ENCODE measurements at regions of chr6 and their contacts with region 1.

Region 1: GRCh38 chr6:158593670-158594069 is 33.8 kb downstream of the TMEM181 start:
- DNase-seq: no peak
- H3K4me3 ChIP-seq: no peak overlapping the region
- H3K27ac ChIP-seq: no peak overlapping the region
- H3K4me1 ChIP-seq: no peaks in the 10 kb centered on the region
- H3K27me3 ChIP-seq: no peaks in the 10 kb centered on the region
- CTCF ChIP-seq: no peak
- EP300 ChIP-seq: no peak
- POLR2A ChIP-seq: no peak

Region 2: GRCh38 chr6:158548418-158549161 is 45.1 kb before region 1 on chr6:
- in situ Hi-C with region 1: no loop called
- intact Hi-C with region 1: loop called (anchors 1 kb)
- DNase-seq: no peak
- H3K4me3 ChIP-seq: no peak overlapping the region
- H3K27ac ChIP-seq: no peak overlapping the region
- H3K4me1 ChIP-seq: no peaks in the 10 kb centered on the region
- H3K27me3 ChIP-seq: no peaks in the 10 kb centered on the region
- CTCF ChIP-seq: no peak
- EP300 ChIP-seq: no peak
- POLR2A ChIP-seq: no peak

Region 3: GRCh38 chr6:159422041-159422984 is 828.6 kb after region 1 on chr6:
- in situ Hi-C with region 1: no loop called
- intact Hi-C with region 1: no loop called
- DNase-seq: no peak
- H3K4me3 ChIP-seq: no peak overlapping the region
- H3K27ac ChIP-seq: no peak overlapping the region
- H3K4me1 ChIP-seq: no peaks in the 10 kb centered on the region
- H3K27me3 ChIP-seq: no peaks in the 10 kb centered on the region
- CTCF ChIP-seq: no peak
- EP300 ChIP-seq: no peak
- POLR2A ChIP-seq: no peak

Measured in transverse colon (tissue), 4 donors.